ENCODE measurements at regions of chr17 and their contacts with region 1.

Region 1: DNA sequence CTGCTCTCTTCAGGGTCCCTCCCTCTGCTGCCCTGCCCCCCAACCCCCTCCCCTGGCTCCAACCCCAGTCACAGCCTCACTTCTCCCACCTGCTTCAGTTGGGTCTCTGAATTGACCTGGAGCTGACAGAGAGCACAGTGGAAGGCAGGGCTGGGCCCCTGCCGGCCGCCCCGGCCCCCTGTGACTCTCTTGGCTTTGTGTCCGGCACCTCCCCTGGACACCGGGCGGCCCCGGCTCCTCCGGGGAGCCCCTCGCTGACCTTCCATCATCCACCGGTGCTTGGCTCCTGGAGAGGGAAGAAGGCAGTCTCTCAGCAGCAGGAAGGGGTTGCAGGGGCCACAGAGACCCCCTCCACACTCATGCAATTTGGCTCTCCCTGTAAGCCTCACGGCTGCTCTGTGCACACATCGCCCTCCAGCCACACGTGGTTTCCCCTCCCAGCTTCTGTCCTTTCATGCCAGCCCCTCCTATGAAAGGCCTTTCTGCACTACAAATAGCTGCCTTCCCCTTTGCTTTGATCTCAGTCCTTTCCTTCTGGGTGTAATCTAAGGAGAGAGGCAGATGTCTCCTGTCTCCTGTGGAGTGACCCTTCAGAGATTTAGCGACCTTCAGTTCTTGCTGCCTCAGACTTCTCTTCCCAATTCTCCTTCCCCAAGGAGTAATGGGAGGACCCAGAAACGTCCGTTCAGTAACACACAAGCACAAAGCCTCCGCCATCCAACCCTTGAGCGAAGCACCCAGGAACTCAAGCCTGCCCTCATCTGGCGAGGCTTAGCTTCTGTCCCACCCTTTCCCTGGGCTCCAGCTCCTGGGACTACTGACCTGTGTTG is 8.3 kb downstream of the NKIRAS2 start:
- DNase-seq: peak; percentile 76
- ATAC-seq: peak; percentile 84
- H3K4me3 Mint-ChIP-seq: peak overlapping the region; percentile 35; the same call in 1 of the 2 replicates
- H3K27ac Mint-ChIP-seq: peak overlapping the region; percentile 81; the same call in 1 of the 2 replicates
- H3K4me1 Mint-ChIP-seq: peaks cover 11% of the 10 kb centered on the region
- H3K27me3 Mint-ChIP-seq: peaks cover 3% of the 10 kb centered on the region; the same call in 1 of the 2 replicates
- CTCF ChIP-seq: no peak

Region 2: DNA sequence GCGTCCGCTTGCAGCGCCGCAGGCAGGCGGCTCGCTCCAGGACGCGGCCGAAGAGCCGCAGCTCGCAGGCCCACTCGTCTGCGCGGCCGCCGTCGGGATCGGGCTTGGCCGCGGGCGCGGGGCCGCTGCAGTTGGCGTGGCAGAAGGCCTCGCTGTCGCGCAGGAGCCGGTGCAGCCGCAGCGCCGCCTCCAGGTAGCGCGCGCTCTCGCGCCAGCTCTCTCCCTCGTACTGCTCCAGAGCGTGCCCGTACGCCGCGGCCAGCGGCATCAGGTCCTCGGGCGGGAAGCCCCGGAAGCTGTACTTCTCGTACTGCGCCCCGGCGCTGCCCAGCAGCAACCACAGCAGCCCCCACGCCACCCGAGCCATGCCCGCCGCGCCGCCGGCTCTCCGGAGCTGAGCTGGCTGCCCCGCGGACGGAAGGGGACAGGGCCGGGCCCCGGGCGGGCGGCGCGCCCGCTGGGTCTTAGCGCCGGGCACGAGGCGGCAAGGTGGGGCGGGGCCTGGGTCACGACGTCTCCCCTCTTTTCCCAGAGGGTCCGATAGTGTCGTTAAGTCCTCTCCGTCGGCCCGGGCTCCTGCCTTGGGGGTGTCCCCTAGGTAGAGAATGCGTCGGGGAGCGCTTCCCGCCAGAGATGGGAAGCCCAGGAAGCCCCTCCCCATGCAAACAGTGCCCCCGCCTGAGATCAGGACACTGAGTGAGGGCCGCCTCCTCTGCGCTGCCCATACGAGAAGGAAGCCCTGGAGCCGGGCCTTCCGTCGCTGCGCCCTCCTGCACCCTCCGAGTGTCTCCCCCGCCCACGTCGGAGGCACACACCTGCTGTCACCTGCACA is 216.4 kb before region 1 on chr17 and contains the start of gene P3H4:
- CTCF ChIA-PET with region 1: no interaction called
- POLR2A ChIA-PET with region 1: no interaction called
- DNase-seq: peak; percentile 78
- ATAC-seq: peak; percentile 44
- H3K4me3 Mint-ChIP-seq: peak within 1 kb of the TSS; percentile 98
- H3K27ac Mint-ChIP-seq: peak within 1 kb of the TSS; percentile 95
- H3K4me1 Mint-ChIP-seq: peaks cover 24% of the 10 kb centered on the region
- H3K27me3 Mint-ChIP-seq: peaks cover 7% of the 10 kb centered on the region
- CTCF ChIP-seq: peak; percentile 40; the same call in 1 of the 2 replicates
- total RNA-seq, gene P3H4: 32.1 to 34.6 TPM (median 33.5 TPM) in 3 replicates

Region 3: DNA sequence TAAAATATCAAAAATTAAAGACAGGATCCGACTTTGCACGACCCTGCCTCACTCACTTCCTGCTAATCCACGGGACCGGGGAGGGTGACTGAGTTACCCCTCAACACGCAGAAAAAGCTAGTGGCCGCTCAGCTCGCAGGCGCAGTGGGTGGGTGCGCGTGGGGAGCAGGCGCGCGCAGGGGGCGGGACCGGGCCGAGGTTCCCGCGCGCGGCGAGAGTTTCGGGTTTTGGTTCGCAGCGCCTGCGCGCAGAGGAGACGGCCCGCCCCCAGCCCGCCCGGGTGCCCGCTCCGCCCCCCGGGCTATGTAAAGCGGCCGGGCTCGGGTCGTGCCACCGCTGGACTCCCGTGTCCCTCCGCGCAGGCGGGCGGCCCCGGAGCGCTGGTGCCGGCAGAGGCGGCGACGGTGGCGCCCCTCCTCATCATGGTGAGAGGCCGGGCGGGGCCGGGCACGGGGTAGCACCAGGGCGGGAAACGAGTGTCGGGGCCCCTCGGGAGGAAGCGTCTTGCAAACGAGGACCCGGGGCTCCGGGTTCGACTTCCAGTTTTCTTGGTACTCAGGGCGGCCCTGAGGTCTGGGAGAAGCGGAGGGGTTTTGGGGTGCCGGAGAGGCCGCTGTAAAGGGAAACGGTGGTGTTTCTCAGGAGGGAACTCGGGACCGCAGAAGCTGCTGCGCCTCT is 61.6 kb before region 1 on chr17 and contains the start of gene CNP:
- CTCF ChIA-PET with region 1: interaction called, 21 read pairs
- POLR2A ChIA-PET with region 1: no interaction called
- DNase-seq: peak; percentile 85
- ATAC-seq: peak; percentile 27
- H3K4me3 Mint-ChIP-seq: peak within 1 kb of the TSS; percentile 84
- H3K27ac Mint-ChIP-seq: peak within 1 kb of the TSS; percentile 94
- H3K4me1 Mint-ChIP-seq: peaks cover 18% of the 10 kb centered on the region
- H3K27me3 Mint-ChIP-seq: peaks cover 9% of the 10 kb centered on the region
- CTCF ChIP-seq: no peak
- total RNA-seq, gene CNP: 52.5 to 54.2 TPM (median 53.9 TPM) in 3 replicates

Region 4: DNA sequence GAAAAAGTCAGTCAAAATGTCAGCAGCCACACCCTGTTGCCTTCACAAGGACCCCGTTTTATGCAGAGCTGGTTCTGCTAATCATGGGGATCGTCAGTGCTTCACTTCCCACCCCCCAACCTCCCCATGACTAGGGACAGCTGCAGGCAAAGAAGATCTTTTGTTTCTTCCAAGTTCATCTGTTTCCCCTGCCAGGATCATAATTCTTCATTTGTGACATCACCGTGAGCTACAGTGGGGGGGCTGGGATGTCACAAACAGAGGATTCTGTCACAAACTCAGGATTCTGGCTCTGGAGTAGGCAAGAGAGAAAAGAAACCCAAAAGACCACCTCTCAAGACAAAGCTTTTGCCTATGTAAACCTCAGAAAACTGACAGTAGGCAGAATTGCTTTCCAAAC is 35.6 kb before region 1 on chr17:
- CTCF ChIA-PET with region 1: no interaction called
- POLR2A ChIA-PET with region 1: no interaction called
- DNase-seq: no peak
- ATAC-seq: no peak
- H3K4me3 Mint-ChIP-seq: no peak overlapping the region
- H3K27ac Mint-ChIP-seq: no peak overlapping the region
- H3K4me1 Mint-ChIP-seq: no peaks in the 10 kb centered on the region
- H3K27me3 Mint-ChIP-seq: no peaks in the 10 kb centered on the region
- CTCF ChIP-seq: no peak

Region 5: DNA sequence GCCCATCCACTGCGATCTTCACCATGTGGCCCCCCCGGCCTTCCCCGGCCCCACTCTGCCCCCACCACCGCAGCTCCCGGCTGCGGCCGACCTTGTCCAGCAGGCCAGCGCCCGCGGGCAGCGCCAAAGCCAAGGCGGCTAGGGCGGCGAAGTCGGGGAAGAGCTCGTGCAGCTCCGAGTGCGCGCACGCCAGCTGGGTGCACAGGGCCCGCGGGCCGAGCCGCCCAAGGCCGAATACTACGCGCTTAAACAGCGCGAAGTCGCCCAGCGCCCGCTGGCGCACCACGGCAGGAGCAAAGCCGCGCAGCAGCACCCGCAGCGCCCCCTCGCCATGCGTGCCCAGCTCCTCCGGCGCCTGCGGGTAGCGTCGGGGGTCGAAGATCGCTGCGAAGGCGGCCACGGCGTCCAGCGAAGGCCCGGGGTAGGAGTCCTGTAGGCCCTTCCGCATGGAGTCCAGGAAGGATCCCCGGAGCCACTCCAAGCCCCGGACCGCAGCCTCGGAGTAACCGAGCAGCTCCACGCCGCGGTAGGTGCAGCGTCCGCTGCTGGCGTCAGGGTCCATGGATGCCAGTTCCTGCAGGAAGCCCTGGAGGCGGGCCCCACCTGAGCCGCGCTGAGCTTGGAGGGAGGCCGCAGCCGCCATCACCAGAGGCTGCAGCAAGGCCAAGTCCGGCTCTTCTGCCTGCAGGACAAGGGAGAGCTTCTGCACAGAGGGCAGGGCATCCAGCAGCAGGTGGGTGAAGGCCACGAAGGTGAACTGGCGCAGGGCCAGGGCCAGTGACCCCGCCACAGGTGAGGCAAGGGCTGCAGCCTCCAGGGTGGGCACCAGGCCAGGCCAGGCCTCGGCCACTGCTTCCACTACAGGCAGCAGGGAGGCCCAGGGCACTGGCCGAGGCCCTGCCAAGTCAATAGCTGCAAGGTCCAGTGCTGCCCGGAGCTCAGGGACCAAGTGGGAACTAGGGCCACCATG is 11.9 kb after region 1 on chr17:
- CTCF ChIA-PET with region 1: interaction called, 34 read pairs
- POLR2A ChIA-PET with region 1: interaction called, 3 read pairs
- DNase-seq: no peak
- ATAC-seq: no peak
- H3K4me3 Mint-ChIP-seq: no peak overlapping the region
- H3K27ac Mint-ChIP-seq: no peak overlapping the region
- H3K4me1 Mint-ChIP-seq: peaks cover 7% of the 10 kb centered on the region
- H3K27me3 Mint-ChIP-seq: no peaks in the 10 kb centered on the region
- CTCF ChIP-seq: no peak

Region 6: DNA sequence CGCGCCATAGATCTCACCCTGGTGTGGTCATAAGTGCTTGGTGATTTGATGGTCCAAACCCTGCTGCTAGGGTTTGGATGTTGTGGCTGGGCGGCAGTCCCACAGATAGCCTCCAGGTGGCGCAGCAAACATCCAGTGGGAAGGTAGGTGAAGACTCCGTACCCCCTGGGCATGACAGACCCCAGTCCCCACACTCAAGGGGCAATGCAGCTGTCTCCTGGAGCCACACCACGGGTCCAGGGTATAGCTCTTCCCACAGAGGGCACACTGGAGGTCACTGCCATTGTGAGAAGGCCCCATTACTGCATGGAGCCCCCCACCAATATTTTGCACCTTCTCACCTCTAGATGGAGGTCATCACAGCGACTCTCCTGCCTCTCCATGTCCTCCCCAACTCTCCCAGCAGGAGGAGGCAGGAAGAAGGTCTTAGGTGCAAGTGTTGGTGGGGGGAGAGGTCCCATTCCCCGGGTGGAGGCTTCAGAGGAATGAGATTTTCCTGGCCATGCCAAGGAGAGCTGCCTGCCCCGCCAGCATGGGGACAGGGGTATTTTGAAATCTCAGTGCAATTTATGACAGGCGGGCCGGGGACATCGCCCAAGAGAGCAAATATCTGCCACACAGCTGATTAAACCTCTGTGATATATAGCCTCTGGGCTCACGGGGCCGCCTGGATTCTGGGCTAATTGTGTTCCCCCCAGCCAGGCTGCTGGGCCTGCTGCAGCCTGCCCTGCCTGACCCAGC is 39.3 kb after region 1 on chr17:
- CTCF ChIA-PET with region 1: interaction called, 40 read pairs
- POLR2A ChIA-PET with region 1: interaction called, 3 read pairs
- DNase-seq: peak; percentile 92
- ATAC-seq: peak; percentile 76
- H3K4me3 Mint-ChIP-seq: no peak overlapping the region
- H3K27ac Mint-ChIP-seq: no peak overlapping the region
- H3K4me1 Mint-ChIP-seq: peaks cover 20% of the 10 kb centered on the region
- H3K27me3 Mint-ChIP-seq: peaks cover 3% of the 10 kb centered on the region
- CTCF ChIP-seq: peak; percentile 97

Region 7: DNA sequence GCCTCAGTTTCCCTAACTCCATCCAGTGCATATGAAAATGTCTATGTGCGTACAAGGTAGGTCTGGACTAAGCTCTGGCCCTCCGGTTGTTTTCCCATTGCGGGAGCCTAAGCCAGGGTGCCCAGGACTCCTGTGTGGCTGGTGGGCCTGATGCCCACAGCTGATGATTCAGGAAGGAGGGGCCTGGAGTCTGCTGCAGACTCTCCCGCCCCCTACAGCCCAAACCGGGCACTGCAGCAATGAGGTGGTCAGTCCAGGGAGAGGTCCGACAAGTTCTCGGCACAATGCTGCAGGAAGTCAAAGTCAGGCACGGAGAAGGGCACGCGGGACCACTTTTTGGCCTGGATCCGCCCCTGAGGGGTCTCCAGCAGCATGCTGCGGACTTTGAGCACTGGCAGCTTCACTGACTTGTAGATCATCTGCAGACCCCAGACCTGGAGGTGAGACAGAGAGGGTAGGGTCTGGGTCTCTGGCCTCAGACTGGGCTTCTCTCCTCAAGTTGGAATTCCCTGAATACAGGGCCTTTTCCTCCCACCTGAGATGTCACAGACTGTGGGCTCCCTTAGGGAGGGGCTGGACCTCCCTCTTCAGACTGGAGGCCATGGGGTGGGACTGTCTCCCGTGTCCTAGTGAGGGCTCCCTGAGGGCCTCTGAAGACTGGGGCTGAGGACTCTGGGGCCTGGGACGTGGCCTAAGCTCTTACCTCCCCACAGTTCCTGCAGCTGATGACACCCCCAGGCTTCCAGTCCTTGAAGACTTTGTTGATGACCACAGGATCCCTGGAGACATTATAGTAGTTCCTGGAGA is 73.5 kb after region 1 on chr17:
- CTCF ChIA-PET with region 1: interaction called, 138 read pairs
- POLR2A ChIA-PET with region 1: interaction called, 4 read pairs
- DNase-seq: peak; percentile 97
- ATAC-seq: peak; percentile 84
- H3K4me3 Mint-ChIP-seq: no peak overlapping the region
- H3K27ac Mint-ChIP-seq: no peak overlapping the region
- H3K4me1 Mint-ChIP-seq: peaks cover 19% of the 10 kb centered on the region
- H3K27me3 Mint-ChIP-seq: peaks cover 25% of the 10 kb centered on the region
- CTCF ChIP-seq: peak; percentile 98

Region 8: GRCh38 chr17:42120770-42121769 is 92.9 kb after region 1 on chr17 and contains the start of gene KAT2A:
- CTCF ChIA-PET with region 1: interaction called, 54 read pairs
- POLR2A ChIA-PET with region 1: interaction called, 3 read pairs
- DNase-seq: peak; percentile 85
- ATAC-seq: peak; percentile 73
- H3K4me3 Mint-ChIP-seq: peak within 1 kb of the TSS; percentile 69
- H3K27ac Mint-ChIP-seq: 0 out of 2 replicates have a peak within 1 kb of the TSS, but pooled peaks have one; percentile 19
- H3K4me1 Mint-ChIP-seq: peaks cover 31% of the 10 kb centered on the region
- H3K27me3 Mint-ChIP-seq: no peaks in the 10 kb centered on the region
- CTCF ChIP-seq: no peak
- total RNA-seq, gene KAT2A: 44.8 to 54.0 TPM (median 52.7 TPM) in 3 replicates